ENCODE measurements at regions of chr3 and their contacts with region 1.

Region 1: DNA sequence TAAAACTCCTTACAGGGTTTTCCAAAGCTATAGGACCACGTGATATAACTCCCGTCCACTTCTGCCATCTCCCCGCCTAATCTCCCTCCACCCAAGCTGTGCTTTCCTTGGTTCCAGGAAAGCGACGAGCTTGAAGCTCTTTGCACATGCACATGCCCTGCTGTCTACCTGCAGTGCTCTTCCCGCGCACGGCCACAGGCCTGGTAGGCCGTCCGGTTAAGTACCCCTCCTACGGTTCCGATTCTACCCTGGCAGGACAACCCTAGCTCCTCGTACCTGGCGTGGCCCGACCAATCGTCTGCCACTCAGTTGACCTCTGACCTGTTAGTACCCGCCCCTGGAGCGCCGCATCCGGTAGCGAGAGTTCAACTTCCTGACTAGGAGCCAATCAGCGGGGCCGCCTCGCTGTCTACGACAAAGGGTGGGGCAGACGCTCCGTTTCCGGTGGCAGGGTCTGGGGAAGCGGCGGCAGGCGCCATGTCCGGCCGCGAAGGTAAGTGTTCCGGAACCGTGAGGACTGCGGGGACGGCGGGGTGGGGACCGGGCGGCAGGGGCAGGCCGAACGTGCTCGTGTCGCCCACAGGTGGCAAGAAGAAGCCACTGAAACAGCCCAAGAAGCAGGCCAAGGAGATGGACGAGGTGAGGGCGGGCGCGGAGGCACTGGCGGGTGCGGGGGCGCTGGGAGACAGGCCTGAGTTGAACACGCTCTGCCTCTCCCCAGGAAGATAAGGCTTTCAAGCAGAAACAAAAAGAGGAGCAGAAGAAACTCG is at the starts of genes CCDC51 and TMA7:
- DNase-seq: peak; percentile 98
- H3K4me3 ChIP-seq: peak within 1 kb of the TSS; percentile 98
- H3K27ac ChIP-seq: peak within 1 kb of the TSS; percentile 77
- H3K4me1 ChIP-seq: peaks cover 50% of the 10 kb centered on the region
- CTCF ChIP-seq: 0 out of 2 replicates have a peak, but pooled peaks have one; percentile 6
- total RNA-seq, gene CCDC51: 22.0 and 23.0 TPM in 2 replicates
- total RNA-seq, gene TMA7: 313 and 486 TPM in 2 replicates

Region 2: DNA sequence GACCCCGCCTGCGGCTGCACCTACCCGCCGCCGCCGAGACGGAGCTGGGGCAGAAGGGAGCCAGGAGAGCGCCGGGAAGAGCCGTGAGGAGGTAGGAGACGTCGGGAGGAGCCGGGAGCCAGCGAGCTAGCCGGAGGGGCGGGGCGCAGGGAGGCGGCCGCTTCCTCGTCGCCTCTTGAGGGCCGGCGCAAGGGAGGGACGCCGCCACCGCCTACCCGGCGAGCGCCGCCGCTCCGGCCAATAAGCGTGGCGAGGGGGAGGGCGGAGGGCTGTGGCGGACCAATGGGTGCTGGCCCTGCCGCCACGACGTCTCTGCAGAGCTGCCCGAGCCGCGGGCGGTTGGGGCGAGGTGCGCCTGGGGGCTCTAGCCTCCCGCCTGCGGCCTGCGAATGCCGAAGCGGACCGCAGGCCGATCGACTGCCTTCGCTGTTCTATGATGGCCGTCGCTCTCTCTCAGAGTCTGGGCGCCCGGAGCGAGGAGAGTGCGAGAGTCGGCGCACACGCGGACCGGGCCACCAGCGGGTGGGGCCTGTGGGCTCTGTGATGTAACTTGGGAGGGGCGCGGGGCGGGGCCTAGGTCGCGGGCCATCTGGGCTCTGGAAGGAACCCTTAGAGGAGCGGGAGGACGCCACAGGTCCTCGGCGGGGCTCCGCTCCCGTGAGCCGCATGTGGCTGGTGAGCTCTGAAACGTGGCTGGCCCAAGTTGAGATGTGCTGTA is 351.1 kb before region 1 on chr3:
- CTCF ChIA-PET with region 1: no interaction called
- POLR2A ChIA-PET with region 1: no interaction called
- intact Hi-C with region 1: loop called (anchors 10 kb)
- DNase-seq: peak; percentile 96
- H3K4me3 ChIP-seq: peak overlapping the region; percentile 83
- H3K27ac ChIP-seq: peak overlapping the region; percentile 81
- H3K4me1 ChIP-seq: peaks cover 19% of the 10 kb centered on the region
- CTCF ChIP-seq: no peak

Region 3: DNA sequence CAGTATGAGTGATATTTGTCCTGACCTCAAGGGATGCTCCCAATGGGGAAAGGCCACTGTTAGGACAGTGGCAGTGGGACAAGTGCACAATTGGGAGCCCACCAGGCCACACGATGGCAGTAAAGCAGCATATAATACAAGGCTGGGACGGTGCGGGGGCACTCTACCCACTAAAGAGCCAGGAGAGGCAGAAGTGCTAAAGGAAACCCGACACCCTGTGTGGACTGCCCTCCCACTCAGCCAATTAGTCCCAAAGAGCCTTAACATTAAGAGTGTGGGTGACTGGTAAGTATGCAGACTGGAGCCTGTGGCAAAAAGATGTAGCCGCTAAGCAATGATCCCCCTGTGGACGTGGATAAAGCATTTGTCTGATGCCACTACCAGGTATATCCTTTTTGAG is 207.3 kb before region 1 on chr3:
- CTCF ChIA-PET with region 1: interaction called, 3 read pairs
- POLR2A ChIA-PET with region 1: no interaction called
- intact Hi-C with region 1: loop called (anchors 1 kb)
- DNase-seq: peak; percentile 90
- H3K4me3 ChIP-seq: peak overlapping the region; percentile 60
- H3K27ac ChIP-seq: peak overlapping the region; percentile 30
- H3K4me1 ChIP-seq: peaks cover 54% of the 10 kb centered on the region
- CTCF ChIP-seq: peak; percentile 98

Region 4: GRCh38 chr3:48301020-48301796 is 138.8 kb before region 1 on chr3:
- CTCF ChIA-PET with region 1: interaction called, 3 read pairs
- POLR2A ChIA-PET with region 1: interaction called, 4 read pairs
- intact Hi-C with region 1: loop called (anchors 10 kb)
- DNase-seq: peak; percentile 95
- H3K4me3 ChIP-seq: peak within 1 kb of the TSS; percentile 82
- H3K27ac ChIP-seq: peak within 1 kb of the TSS; percentile 86
- H3K4me1 ChIP-seq: peaks cover 47% of the 10 kb centered on the region
- CTCF ChIP-seq: no peak

Region 5: DNA sequence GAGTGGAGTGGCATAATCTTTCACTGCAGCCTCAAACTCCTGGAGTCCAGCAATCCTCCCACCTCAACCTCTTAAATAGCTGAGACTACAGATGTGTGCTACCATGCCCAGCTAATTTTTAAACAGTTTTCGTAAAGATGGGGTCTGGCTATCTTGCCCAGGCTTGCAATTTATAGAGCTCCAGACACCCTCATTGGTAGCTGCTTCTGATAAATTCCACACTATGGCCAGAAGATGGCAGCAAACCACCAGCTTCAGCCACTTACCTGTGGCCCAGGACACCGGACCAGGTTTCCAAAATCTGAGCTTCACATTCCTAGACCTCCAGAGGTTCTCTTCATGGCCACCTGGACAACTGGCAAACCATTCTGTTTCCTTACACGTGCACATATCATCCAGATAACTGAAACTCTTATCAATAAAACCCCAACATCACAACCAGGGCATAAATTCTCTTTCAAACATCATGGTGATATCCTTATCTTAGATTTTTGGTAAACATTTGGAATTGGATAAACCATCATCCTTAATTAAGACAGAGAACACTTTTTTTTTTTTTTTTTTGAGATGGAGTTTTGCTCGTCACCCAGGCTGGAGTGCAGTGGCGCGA is 39.1 kb before region 1 on chr3:
- CTCF ChIA-PET with region 1: interaction called, 31 read pairs
- POLR2A ChIA-PET with region 1: interaction called, 3 read pairs
- intact Hi-C with region 1: loop called (anchors 1 kb)
- DNase-seq: peak; percentile 79
- H3K4me3 ChIP-seq: no peak overlapping the region
- H3K27ac ChIP-seq: no peak overlapping the region
- H3K4me1 ChIP-seq: no peaks in the 10 kb centered on the region
- CTCF ChIP-seq: peak; percentile 92

Region 6: DNA sequence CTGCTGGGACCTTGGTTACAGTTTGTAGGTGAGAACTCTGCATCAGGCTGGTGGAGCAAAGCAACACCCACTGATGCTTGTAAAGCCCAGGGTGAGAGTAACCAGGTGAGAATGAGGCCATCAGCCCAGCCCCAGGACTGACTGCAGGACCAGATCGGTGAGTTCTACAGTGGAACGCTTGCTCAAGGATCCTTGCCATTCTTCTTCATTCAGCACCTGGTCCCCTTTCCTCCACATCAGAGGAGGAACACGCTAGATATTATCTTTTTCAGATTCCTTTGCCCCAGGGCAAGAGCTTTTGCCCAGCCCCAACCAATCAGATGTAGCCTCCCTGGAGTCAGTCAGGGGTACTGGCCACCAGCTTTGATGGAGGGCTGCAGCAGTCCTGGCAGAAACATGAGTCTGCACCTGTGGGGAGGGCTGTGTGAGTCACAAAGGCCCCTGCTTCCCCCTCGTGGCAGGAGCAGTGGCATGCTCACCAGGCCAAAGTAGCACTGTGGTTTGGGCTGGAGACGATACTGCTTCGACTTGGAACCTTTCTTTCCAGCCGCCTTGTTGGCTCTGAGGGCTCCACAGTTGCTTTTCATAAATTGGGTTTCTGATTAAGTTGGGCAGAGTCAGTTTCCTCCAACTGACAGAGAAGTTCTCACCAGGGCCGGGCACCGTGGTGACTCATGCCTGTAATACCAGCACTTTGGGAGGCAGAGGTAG is 67.5 kb after region 1 on chr3:
- CTCF ChIA-PET with region 1: interaction called, 8 read pairs
- POLR2A ChIA-PET with region 1: no interaction called
- intact Hi-C with region 1: loop called (anchors 2 kb)
- DNase-seq: peak; percentile 78
- H3K4me3 ChIP-seq: no peak overlapping the region
- H3K27ac ChIP-seq: no peak overlapping the region
- H3K4me1 ChIP-seq: no peaks in the 10 kb centered on the region
- CTCF ChIP-seq: peak; percentile 87

Region 7: DNA sequence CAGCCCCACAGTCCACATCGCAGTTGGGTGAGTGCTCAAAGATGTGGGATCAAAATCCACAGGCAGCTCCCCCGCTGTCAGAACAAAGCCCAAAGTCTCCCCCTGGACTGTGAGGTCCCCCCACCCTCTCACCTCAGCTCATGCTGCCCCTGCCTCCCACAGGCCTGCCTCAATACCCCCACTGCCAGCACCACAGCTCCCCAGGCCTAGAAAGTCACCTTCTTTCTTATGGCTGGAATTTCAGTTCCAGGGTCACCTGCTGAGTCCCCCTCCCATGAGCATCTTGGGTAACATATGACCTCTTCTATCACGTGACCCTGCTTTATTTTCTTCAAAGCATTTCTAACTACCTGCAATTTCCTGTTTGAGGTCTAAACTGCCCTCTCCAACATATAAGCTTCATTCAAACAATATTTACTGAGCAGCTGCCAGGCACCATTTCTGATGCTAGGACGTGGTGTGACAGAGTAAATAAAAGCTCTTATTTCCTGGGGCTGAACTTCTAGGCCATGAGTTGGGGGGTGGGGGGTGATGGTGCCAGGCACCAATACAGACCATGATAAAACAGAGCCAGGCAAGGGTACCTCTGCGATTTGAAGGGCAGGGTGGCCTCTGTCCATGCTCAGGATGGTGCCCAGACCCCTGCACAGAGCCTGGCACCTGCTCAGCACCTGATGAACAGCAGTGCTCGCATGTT is 184.0 kb after region 1 on chr3:
- CTCF ChIA-PET with region 1: no interaction called
- POLR2A ChIA-PET with region 1: no interaction called
- intact Hi-C with region 1: no loop called
- DNase-seq: peak; percentile 37
- H3K4me3 ChIP-seq: no peak overlapping the region
- H3K27ac ChIP-seq: no peak overlapping the region
- H3K4me1 ChIP-seq: peaks cover 9% of the 10 kb centered on the region
- CTCF ChIP-seq: no peak

Region 8: GRCh38 chr3:48635222-48636021 is 195.4 kb after region 1 on chr3 and contains the start of gene SLC26A6:
- CTCF ChIA-PET with region 1: interaction called, 3 read pairs
- POLR2A ChIA-PET with region 1: no interaction called
- intact Hi-C with region 1: loop called (anchors 10 kb)
- DNase-seq: peak; percentile 96
- H3K4me3 ChIP-seq: peak within 1 kb of the TSS; percentile 87
- H3K27ac ChIP-seq: peak within 1 kb of the TSS; percentile 52
- H3K4me1 ChIP-seq: peaks cover 27% of the 10 kb centered on the region
- CTCF ChIP-seq: peak; percentile 85
- total RNA-seq, gene SLC26A6: 28.4 and 42.1 TPM in 2 replicates

Measured in OCI-LY7 (cell line).